ENCODE measurements at regions of chr11 and their contacts with region 1.

Region 1: GRCh38 chr11:70202898-70203748 is at the start of gene FADD:
- DNase-seq: peak; percentile 60 to 95
- H3K4me3 ChIP-seq: peak within 1 kb of the TSS; percentile 78 to 97
- H3K27ac ChIP-seq: peak within 1 kb of the TSS; percentile 82 to 94
- H3K4me1 ChIP-seq: peaks cover 5 to 18% of the 10 kb centered on the region in 2 donors
- H3K27me3 ChIP-seq: no peaks in the 10 kb centered on the region
- CTCF ChIP-seq: no peak
- total RNA-seq, gene FADD: 22.2 TPM

Region 2: GRCh38 chr11:68974421-68975194 is 1228.5 kb before region 1 on chr11:
- intact Hi-C with region 1: no loop called
- DNase-seq: peak in 1 of 2 donors; percentile 49
- H3K4me3 ChIP-seq: no peak overlapping the region
- H3K27ac ChIP-seq: no peak overlapping the region
- H3K4me1 ChIP-seq: no peaks in the 10 kb centered on the region
- H3K27me3 ChIP-seq: no peaks in the 10 kb centered on the region
- CTCF ChIP-seq: no peak

Region 3: DNA sequence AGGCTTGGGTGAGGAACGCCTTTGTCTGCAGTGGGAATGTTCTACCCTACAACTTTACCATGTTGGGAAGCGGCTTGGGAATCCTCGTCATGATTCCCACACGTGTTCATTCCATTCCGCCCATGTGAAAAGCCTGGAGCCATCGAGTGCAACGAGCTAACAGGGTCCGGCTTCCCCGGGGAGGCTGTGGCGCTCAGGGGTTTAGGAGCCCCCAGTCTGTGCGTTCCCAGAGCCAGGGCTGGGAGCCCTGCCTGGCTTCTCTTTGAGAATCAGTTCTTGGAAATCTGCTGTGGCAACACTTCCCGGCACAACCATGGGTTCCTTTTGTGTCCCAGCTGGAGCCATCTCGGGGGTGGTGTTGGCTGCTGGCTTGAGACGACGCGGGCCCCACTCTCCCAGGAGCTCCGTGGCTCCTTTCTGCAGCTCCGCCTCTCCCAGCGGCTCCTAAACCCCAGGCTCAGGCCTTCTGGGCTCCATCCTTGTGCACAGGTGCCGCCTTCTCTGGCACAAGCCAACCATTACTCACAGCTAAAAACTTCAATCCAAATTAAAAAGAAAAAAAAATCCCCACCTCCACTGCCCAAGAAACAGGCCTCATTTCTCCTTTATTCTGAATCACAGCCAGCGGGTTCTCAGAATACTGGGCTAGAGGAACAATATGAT is 48.7 kb after region 1 on chr11:
- intact Hi-C with region 1: loop called (anchors 1 kb)
- DNase-seq: peak in 1 of 2 donors; percentile 73
- H3K4me3 ChIP-seq: peak overlapping the region in 1 of 2 donors; percentile 19
- H3K27ac ChIP-seq: peak overlapping the region; percentile 83 to 86
- H3K4me1 ChIP-seq: peaks cover 0 to 11% of the 10 kb centered on the region in 2 donors
- H3K27me3 ChIP-seq: no peaks in the 10 kb centered on the region
- CTCF ChIP-seq: no peak

Region 4: GRCh38 chr11:70270104-70270876 is 67.2 kb after region 1 on chr11 and contains the start of gene PPFIA1:
- intact Hi-C with region 1: loop called (anchors 1 kb)
- DNase-seq: peak; percentile 74 to 97
- H3K4me3 ChIP-seq: peak within 1 kb of the TSS; percentile 88 to 98
- H3K27ac ChIP-seq: peak within 1 kb of the TSS; percentile 77 to 79
- H3K4me1 ChIP-seq: peaks cover 5 to 15% of the 10 kb centered on the region in 2 donors
- H3K27me3 ChIP-seq: no peaks in the 10 kb centered on the region
- CTCF ChIP-seq: peak in 1 of 3 experiments; percentile 14
- total RNA-seq, gene PPFIA1: 29.3 TPM

Region 5: DNA sequence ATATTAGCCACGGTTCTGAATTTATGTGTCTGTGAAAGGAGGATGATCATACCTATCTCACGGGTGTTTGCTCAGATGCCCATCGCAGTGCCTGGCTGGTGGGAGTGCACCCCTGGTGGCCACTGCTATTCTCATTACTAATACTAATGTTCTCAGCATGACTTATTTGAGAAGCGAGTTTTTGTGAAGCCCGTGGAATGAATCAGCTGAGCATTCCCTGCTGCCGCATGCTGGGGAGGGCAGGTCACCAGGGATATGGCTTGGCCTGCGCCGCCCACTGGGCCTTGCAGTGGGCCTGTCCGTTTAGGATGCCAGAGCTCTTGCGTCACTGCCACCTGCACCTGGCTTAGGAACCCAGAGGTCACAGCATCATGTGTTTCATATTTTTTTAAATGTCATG is 212.1 kb after region 1 on chr11:
- intact Hi-C with region 1: no loop called
- DNase-seq: no peak
- H3K4me3 ChIP-seq: no peak overlapping the region
- H3K27ac ChIP-seq: no peak overlapping the region
- H3K4me1 ChIP-seq: no peaks in the 10 kb centered on the region
- H3K27me3 ChIP-seq: no peaks in the 10 kb centered on the region
- CTCF ChIP-seq: no peak

Measured in ascending aorta (tissue), 2 donors.